Aorta (tissue), 5 donors: ENCODE measurements at regions of chr4 and their contacts with region 1.

Region 1: DNA sequence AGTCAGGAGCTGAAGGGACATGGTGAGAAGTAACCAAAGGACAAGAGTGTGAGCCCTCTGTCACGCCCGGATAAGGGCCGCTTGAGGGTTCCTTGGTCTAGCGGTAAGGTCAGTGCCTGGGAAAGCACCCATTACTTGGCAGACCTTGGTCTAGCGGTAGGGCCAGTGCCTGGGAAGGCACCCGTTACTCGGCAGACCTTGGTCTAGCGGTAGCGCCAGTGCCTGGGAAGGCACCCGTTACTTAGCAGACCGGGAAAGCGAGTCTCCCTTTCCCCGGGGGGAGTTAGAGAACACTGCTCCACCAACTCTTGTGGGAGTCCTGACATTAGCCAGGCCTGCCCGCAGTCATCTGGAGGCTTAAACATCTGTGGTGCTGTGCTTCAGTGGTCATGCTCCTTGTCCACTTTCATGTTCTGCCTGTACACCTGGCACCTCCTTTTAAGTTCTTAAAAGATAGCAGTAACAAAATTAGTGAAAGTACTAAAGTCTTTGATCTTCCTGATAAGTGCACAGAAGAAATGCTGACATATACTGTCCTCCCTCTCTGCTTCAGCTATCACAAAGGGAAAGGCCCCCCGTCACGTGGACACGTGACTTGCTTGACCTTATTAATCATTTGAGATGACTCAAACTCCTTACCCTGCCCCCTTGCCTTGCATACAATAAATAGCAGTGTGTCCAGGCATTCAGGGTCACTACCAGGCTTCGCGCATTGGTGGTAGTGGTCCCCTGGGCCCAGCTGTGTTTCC is 9.3 kb upstream of the SEC24B start:
- DNase-seq: no peak
- ATAC-seq: no peak
- H3K4me3 ChIP-seq: no peak overlapping the region
- H3K27ac ChIP-seq: no peak overlapping the region
- H3K4me1 ChIP-seq: no peaks in the 10 kb centered on the region
- H3K27me3 ChIP-seq: no peaks in the 10 kb centered on the region

Region 2: DNA sequence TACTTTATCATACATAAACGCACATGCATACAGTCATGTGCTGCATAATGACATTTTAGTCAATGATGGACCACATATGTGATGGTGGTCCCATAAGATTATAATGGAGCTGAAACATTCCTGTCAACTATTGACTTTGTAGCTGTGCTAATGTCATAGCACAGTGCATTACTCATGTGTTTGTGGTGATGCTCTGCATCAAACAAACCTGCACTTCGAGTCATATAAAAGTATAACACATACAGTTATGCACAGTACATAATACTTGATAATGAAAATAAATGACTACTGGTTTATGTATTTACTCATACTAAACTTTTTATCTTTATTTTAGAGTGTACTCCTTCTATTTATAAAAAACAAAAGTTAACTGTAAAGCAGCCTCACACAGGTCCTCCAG is 75.2 kb after region 1 on chr4:
- intact Hi-C with region 1: no loop called
- DNase-seq: no peak
- ATAC-seq: no peak
- H3K4me3 ChIP-seq: no peak overlapping the region
- H3K27ac ChIP-seq: no peak overlapping the region
- H3K4me1 ChIP-seq: no peaks in the 10 kb centered on the region
- H3K27me3 ChIP-seq: no peaks in the 10 kb centered on the region

Region 3: DNA sequence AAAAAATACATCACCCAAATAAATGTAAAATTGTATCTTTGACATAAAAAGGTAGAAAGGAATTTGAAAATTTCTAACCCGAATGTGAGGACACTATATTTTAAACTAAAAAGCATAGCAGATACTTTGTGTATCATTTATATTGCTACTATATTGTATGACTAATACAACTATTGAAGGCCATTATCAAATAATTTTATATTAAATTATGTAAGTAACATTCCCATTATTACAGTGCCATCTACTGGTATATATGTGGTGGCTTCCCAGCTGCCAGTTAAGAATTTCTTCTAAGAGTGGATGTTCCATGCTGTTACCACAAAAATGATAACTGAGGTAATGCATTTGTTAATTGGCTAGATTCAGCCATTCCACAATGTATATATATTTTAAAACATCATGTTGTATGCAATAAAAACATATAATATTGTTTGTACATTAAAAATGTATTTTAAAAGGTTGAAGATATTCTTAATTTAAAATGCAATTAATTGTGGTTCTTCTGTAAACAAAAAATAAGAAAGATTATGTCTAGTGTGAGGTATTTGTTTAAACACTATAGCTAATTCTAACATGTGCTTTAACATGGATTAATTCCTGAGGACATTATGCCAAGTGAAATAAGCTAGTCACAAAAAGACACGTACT is 553.7 kb after region 1 on chr4:
- intact Hi-C with region 1: loop called (anchors 5 kb)
- DNase-seq: no peak
- ATAC-seq: no peak
- H3K4me3 ChIP-seq: no peak overlapping the region
- H3K27ac ChIP-seq: no peak overlapping the region
- H3K4me1 ChIP-seq: no peaks in the 10 kb centered on the region
- H3K27me3 ChIP-seq: no peaks in the 10 kb centered on the region